K562 (cell line): ENCODE measurements at regions of chr1 and their contacts with region 1.

Region 1: DNA sequence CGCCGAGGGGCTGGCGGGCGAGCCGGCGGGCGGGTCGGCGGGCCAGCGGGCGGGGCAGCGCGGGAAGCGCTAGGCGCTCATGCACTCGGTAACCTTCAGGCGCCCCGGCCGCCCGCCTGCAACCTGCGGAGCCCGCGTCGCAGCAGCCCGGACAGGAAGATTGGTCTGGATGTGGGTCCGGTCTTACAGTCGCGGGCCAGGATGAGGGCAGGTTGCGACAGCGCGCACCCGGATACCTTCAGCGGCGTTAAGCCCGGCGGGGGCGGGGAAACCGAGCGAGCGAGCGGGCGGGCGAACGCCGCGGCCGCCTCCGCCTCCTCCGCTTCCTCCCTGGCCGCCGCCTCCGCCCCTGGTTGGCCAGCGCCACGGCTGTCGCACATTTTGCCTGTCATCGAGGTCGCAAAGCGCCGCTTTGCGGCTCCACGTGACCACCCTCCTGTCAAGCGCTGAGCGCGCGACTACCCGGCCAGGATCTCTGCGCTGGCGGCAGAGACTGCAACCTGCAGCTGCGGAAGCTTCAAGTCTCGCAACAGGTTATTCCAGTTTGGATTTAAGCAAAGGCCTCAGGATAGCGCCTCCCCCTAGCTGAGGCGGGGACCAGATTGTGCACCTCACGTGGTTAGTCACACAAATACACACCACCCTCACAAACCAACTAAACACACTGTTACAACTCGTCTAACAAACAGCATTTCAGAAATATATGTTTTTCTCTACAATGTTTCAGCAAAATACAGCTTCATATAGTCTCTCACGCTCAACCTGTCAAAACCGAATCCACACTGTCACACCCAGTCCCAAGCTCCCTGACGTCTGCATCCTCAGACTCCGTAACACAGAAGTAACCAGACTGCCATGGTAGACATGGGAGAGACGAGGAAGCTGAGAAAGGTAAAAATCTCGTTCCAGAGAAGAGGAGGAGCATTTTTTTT is at the start of gene FAF1:
- DNase-seq: peak; percentile 94 to 100 (median 96)
- ATAC-seq: peak; percentile 88
- H3K4me3 ChIP-seq: peak within 1 kb of the TSS; percentile 62
- H3K27ac ChIP-seq: peak within 1 kb of the TSS; percentile 85
- H3K4me1 ChIP-seq: peaks cover 9 to 15% of the 10 kb centered on the region in 2 experiments; a peak in 4 of 5 replicates
- H3K27me3 ChIP-seq: no peaks in the 10 kb centered on the region
- CTCF ChIP-seq: peak; percentile 34 to 60 (median 56)
- EP300 ChIP-seq: peak; percentile 58
- POLR2A ChIP-seq: peak; percentile 94
- RAD21 ChIP-seq: peak in 1 of 2 experiments; percentile 20; a peak in 2 of 4 replicates
- polyA plus RNA-seq, gene FAF1: 48.7 to 60.9 TPM

Region 2: GRCh38 chr1:50873458-50874187 is 86.6 kb before region 1 on chr1:
- CTCF ChIA-PET with region 1: no interaction called
- POLR2A ChIA-PET with region 1: no interaction called
- in situ Hi-C with region 1: no loop called
- intact Hi-C with region 1: no loop called
- DNase-seq: peak; percentile 51 to 91 (median 62)
- ATAC-seq: peak; percentile 96
- H3K4me3 ChIP-seq: peak overlapping the region; percentile 37
- H3K27ac ChIP-seq: peak overlapping the region; percentile 67
- H3K4me1 ChIP-seq: peaks cover 0 to 3% of the 10 kb centered on the region in 2 experiments; a peak in 2 of 5 replicates
- H3K27me3 ChIP-seq: no peaks in the 10 kb centered on the region
- CTCF ChIP-seq: peak; percentile 93 to 98 (median 97)
- EP300 ChIP-seq: peak; percentile 45; the same call in 1 of the 2 replicates
- POLR2A ChIP-seq: no peak
- RAD21 ChIP-seq: peak; percentile 87 to 88

Region 3: DNA sequence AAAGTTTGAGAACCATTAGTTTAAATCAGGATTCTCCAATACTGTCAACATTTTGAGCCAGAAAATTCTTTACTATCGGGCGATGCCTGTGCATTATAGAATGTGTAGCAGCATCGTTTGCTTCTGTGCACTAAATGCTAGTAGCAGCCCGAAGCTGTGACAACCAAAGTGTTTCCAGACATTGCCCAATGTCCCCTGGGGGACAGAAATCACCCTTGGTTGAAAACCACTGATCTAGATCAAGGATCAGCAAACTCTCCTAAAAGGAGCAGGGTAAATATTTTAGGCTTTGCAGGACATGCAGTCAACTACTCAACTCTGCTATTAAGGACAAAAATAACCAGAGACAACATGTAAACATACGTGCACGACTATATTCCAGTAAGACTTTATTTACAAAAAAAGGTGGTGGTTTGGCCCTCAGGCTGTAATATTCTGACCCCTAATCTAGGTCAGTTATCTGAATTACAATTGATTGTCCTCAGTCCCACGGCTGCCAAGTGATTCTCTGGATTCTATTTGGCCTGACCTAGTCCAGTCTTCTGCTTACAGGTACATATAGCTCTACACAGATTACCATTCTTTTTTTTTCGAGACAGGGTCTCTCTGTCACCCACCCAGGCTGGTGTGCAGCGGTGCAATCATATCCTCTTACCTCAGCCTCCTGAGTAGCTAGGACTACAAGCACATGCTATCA is 10.7 kb before region 1 on chr1:
- CTCF ChIA-PET with region 1: no interaction called
- POLR2A ChIA-PET with region 1: interaction called, 43 read pairs
- in situ Hi-C with region 1: no loop called
- intact Hi-C with region 1: no loop called
- DNase-seq: no peak
- ATAC-seq: no peak
- H3K4me3 ChIP-seq: no peak overlapping the region
- H3K27ac ChIP-seq: no peak overlapping the region
- H3K4me1 ChIP-seq: peaks cover 4 to 10% of the 10 kb centered on the region in 2 experiments; a peak in 2 of 5 replicates
- H3K27me3 ChIP-seq: no peaks in the 10 kb centered on the region
- CTCF ChIP-seq: no peak
- EP300 ChIP-seq: no peak
- POLR2A ChIP-seq: no peak
- RAD21 ChIP-seq: no peak

Region 4: GRCh38 chr1:51100264-51100880 is 140.2 kb after region 1 on chr1:
- CTCF ChIA-PET with region 1: no interaction called
- POLR2A ChIA-PET with region 1: no interaction called
- in situ Hi-C with region 1: no loop called
- intact Hi-C with region 1: no loop called
- DNase-seq: no peak
- ATAC-seq: no peak
- H3K4me3 ChIP-seq: no peak overlapping the region
- H3K27ac ChIP-seq: no peak overlapping the region
- H3K4me1 ChIP-seq: no peaks in the 10 kb centered on the region
- H3K27me3 ChIP-seq: peaks cover 0 to 2% of the 10 kb centered on the region in 2 experiments; a peak in 1 of 5 replicates
- CTCF ChIP-seq: no peak
- EP300 ChIP-seq: no peak
- POLR2A ChIP-seq: no peak
- RAD21 ChIP-seq: no peak